Psoas muscle (tissue), 8 donors: ENCODE measurements at regions of chr7 and their contacts with region 1.

Region 1: GRCh38 chr7:117907049-117907640 is 33.9 kb upstream of the CTTNBP2 start:
- DNase-seq: no peak
- ATAC-seq: no peak
- H3K4me3 ChIP-seq: no peak overlapping the region
- H3K27ac ChIP-seq: no peak overlapping the region
- H3K4me1 ChIP-seq: no peaks in the 10 kb centered on the region
- H3K27me3 ChIP-seq: peaks cover 0 to 5% (median 0%) of the 10 kb centered on the region in 3 donors
- CTCF ChIP-seq: no peak

Region 2: GRCh38 chr7:119197877-119198527 is 1290.9 kb after region 1 on chr7:
- intact Hi-C with region 1: loop called in 1 of 2 experiments (anchors 5 kb)
- DNase-seq: no peak
- ATAC-seq: no peak
- H3K4me3 ChIP-seq: no peak overlapping the region
- H3K27ac ChIP-seq: no peak overlapping the region
- H3K4me1 ChIP-seq: no peaks in the 10 kb centered on the region
- H3K27me3 ChIP-seq: no peaks in the 10 kb centered on the region
- CTCF ChIP-seq: peak; percentile 35